ENCODE measurements at regions of chr2 and their contacts with region 1.

Region 1: DNA sequence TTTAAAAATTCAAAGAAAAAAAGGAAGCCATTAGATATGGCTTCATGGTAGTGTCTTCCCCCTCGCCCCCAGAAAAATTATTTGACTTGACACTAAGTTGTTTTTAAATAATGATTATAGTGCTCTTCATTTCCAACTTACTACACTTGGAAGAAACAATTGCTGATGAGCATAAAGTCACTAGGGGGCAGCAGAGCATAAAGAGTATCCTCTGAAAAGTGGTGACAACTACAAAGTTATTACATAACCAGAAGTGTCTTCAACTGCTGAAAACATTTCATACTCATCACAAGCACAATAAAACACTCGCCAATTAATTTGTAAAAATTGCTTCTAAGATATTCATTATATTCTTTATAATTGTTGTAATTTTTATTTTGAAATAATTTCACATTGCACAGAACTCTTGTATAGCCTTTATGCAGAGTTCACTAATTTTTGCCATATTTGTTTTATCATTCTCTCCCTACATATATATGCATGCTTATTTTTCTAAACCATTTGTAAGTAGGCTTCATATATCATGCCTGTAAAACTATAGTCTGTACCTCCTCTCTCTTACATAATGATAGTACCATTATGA is 54.9 kb downstream of the EXOC6B start:
- DNase-seq: peak; percentile 63 to 81 (median 66)
- ATAC-seq: peak; percentile 62
- H3K4me3 ChIP-seq: no peak overlapping the region
- H3K27ac ChIP-seq: no peak overlapping the region
- H3K4me1 ChIP-seq: no peaks in the 10 kb centered on the region
- H3K27me3 ChIP-seq: no peaks in the 10 kb centered on the region
- CTCF ChIP-seq: peak; percentile 70 to 94 (median 86)
- POLR2A ChIP-seq: no peak

Region 2: GRCh38 chr2:72638600-72639194 is 132.3 kb before region 1 on chr2:
- intact Hi-C with region 1: no loop called
- DNase-seq: no peak
- ATAC-seq: no peak
- H3K4me3 ChIP-seq: no peak overlapping the region
- H3K27ac ChIP-seq: no peak overlapping the region
- H3K4me1 ChIP-seq: no peaks in the 10 kb centered on the region
- H3K27me3 ChIP-seq: no peaks in the 10 kb centered on the region
- CTCF ChIP-seq: no peak
- POLR2A ChIP-seq: no peak

Region 3: DNA sequence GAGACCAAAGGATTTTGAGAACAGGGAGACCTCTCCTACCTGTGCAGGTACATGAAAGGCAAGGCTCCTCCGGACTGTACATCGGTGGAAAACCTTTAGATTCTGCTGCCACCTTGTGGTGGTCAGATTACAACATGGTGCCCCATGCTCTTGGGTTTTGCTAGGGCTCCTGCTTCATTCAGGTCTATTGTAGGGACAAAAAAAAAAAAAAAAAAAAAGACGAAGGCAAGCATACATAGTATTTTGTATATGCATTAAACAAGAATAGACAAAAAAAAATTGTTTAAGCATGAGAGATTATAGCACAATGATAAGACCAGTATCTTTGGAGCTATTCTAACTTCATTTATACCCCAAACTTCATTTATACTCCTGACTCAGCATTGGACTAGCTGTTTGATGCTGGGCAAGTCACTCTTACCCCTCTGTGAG is 88.9 kb after region 1 on chr2:
- intact Hi-C with region 1: loop called (anchors 5 kb)
- DNase-seq: peak; percentile 76 to 84 (median 81)
- ATAC-seq: peak; percentile 78
- H3K4me3 ChIP-seq: no peak overlapping the region
- H3K27ac ChIP-seq: no peak overlapping the region
- H3K4me1 ChIP-seq: peaks cover 10% of the 10 kb centered on the region
- H3K27me3 ChIP-seq: no peaks in the 10 kb centered on the region
- CTCF ChIP-seq: peak in 6 of 7 experiments; percentile 48 to 75 (median 64)
- POLR2A ChIP-seq: no peak

Region 4: DNA sequence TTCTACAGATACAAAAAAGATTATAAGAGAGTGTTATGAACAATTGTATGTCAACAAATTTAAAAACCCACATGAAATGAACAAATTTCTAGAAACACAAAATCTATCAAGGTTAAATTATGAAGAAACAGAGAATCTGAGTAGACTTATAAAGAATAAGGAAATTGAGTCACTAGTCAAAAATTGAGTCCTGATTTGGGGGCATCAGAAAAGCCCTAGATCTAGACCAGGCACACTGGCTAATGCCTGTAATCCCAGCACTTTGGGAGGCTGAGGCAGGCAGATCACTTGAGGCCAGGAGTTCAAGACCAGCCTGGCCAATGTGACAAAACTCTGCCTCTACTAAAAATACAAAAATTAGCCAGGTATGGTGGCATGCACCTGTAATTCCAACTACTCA is 100.9 kb after region 1 on chr2:
- intact Hi-C with region 1: no loop called
- DNase-seq: no peak
- ATAC-seq: no peak
- H3K4me3 ChIP-seq: no peak overlapping the region
- H3K27ac ChIP-seq: no peak overlapping the region
- H3K4me1 ChIP-seq: no peaks in the 10 kb centered on the region
- H3K27me3 ChIP-seq: no peaks in the 10 kb centered on the region
- CTCF ChIP-seq: no peak
- POLR2A ChIP-seq: no peak

Region 5: DNA sequence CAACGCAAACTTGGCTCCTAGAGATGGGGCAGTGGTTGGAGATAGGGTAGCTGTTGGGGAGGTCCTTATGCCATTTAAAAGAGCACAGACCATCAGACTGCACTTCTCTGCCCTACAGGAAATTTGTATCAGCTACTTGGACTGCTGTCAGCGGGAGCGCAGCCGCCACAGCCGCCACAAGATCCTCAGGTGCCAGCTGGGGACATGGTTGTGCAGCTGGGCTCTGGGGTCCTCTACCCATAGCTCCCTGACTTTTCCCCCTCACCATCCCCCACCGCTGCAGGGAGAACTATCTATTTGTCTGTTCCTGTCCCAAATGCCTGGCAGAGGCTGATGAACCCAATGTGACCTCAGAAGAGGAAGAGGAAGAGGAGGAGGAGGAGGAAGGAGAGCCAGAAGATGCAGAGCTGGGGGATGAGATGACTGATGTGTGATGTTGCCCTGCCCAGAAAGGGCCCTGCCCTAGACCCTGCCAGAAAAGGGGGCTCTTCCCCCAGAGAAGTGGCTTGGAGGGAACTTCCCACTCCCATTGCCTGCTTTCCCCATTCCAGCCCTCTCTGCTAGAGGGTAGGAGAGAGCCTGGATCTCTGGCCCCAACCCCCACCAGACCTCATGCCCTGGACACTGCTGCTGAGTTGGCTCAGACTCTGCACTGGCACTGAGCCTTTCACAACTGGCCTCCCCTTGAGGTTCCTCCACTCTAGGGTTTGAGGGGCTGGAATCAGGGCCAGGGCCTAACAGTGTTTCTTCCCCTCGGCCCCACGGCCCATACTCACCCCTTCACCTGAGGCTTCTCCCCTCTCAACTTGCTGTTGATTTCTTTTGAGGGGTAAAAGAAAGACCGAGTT is 454.8 kb after region 1 on chr2:
- intact Hi-C with region 1: no loop called
- DNase-seq: no peak
- ATAC-seq: no peak
- H3K4me3 ChIP-seq: no peak overlapping the region
- H3K27ac ChIP-seq: no peak overlapping the region
- H3K4me1 ChIP-seq: no peaks in the 10 kb centered on the region
- H3K27me3 ChIP-seq: no peaks in the 10 kb centered on the region
- CTCF ChIP-seq: no peak
- POLR2A ChIP-seq: no peak

Measured in body of pancreas (tissue), 4 donors.